Left colon (tissue), 2 donors: ENCODE measurements at regions of chr4 and their contacts with region 1.

Region 1: GRCh38 chr4:17347445-17347844 is 164.4 kb downstream of the QDPR start:
- DNase-seq: peak in 1 of 2 donors; percentile 8
- ATAC-seq: no peak

Region 2: DNA sequence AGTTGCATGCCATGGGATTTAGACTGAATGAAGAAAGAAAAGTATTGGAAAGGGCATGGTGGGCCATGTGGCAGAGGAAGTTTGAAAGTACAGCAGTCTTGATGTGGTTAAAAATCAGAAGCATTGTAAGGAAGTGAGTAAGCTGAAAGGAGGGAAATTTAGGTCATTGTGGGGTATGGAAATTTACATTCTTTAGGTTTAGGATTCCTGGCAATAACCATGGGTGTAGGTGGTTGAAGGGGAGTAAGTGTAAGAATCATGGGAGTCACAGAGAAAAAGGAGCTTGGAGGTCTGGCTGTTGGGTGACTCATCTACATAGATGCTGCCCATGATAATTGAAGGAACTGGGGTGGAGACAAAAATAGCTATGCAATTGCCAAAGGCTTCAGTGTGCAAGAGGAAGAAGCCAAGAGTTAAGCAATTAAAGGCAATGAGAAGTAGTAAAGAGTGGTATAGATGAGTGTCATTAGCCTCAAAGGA is 205.2 kb before region 1 on chr4:
- intact Hi-C with region 1: no loop called
- DNase-seq: no peak
- ATAC-seq: no peak

Region 3: GRCh38 chr4:17447675-17448298 is 100.3 kb after region 1 on chr4:
- intact Hi-C with region 1: loop called in 1 of 2 experiments (anchors 10 kb)
- DNase-seq: peak in 1 of 2 donors; percentile 27
- ATAC-seq: peak; percentile 82

Region 4: DNA sequence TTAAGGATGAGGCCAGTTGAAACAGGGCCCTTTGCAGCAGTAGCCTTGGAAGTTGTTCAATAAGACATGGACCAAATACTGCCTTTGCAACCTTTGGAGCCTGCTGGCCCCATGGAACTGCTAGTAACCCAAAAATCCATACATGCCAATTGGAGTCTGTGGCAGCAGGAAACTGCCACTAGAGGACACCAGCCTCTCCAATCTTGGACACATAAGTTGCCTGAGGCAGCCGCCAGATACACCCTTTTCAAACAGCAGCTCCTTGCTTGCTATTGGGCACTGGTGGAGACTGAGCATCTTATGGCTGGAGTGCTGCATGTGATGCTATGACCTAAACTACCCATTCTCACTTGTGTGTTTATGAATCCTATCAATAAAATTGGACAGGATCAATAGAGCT is 214.7 kb after region 1 on chr4:
- intact Hi-C with region 1: no loop called
- DNase-seq: no peak
- ATAC-seq: peak; percentile 26